T-cell (primary cell): ENCODE measurements at regions of chr9 and their contacts with region 1.

Region 1: GRCh38 chr9:33159760-33160127 is 7.4 kb downstream of the B4GALT1 start:
- DNase-seq: peak in 34 of 35 experiments; percentile 27 to 83 (median 68)
- ATAC-seq: peak; percentile 44 to 77 (median 49)
- H3K4me3 ChIP-seq: peak overlapping the region; percentile 28 to 42
- H3K4me3 Mint-ChIP-seq: peak overlapping the region; percentile 63 to 96 (median 76)
- H3K27ac ChIP-seq: peak overlapping the region; percentile 97
- H3K27ac Mint-ChIP-seq: peak overlapping the region; percentile 94 to 96
- H3K4me1 ChIP-seq: peaks cover 61 to 88% of the 10 kb centered on the region in 2 experiments
- H3K4me1 Mint-ChIP-seq: peaks cover 92 to 97% (median 93%) of the 10 kb centered on the region in 3 donors
- H3K27me3 ChIP-seq: no peaks in the 10 kb centered on the region
- H3K27me3 Mint-ChIP-seq: no peaks in the 10 kb centered on the region

Region 2: GRCh38 chr9:33092634-33093033 is 67.1 kb before region 1 on chr9:
- CTCF ChIA-PET with region 1: no interaction called
- POLR2A ChIA-PET with region 1: no interaction called
- DNase-seq: no peak
- ATAC-seq: no peak
- H3K4me3 ChIP-seq: no peak overlapping the region
- H3K4me3 Mint-ChIP-seq: no peak overlapping the region
- H3K27ac ChIP-seq: no peak overlapping the region
- H3K27ac Mint-ChIP-seq: no peak overlapping the region
- H3K4me1 ChIP-seq: no peaks in the 10 kb centered on the region
- H3K4me1 Mint-ChIP-seq: peaks cover 0 to 6% (median 6%) of the 10 kb centered on the region in 3 donors
- H3K27me3 ChIP-seq: no peaks in the 10 kb centered on the region
- H3K27me3 Mint-ChIP-seq: no peaks in the 10 kb centered on the region

Region 3: GRCh38 chr9:33140401-33141360 is 19.1 kb before region 1 on chr9:
- CTCF ChIA-PET with region 1: interaction called in 1 of 2 experiments, 4 read pairs
- POLR2A ChIA-PET with region 1: interaction called, 8 to 11 read pairs
- DNase-seq: no peak
- ATAC-seq: peak in 1 of 4 experiments; percentile 18
- H3K4me3 ChIP-seq: no peak overlapping the region
- H3K4me3 Mint-ChIP-seq: peak overlapping the region; percentile 0 to 79 (median 50)
- H3K27ac ChIP-seq: peak overlapping the region; percentile 73
- H3K27ac Mint-ChIP-seq: peak overlapping the region; percentile 94 to 98
- H3K4me1 ChIP-seq: peaks cover 61 to 99% of the 10 kb centered on the region in 2 experiments
- H3K4me1 Mint-ChIP-seq: peaks cover 96 to 98% (median 96%) of the 10 kb centered on the region in 3 donors
- H3K27me3 ChIP-seq: no peaks in the 10 kb centered on the region
- H3K27me3 Mint-ChIP-seq: no peaks in the 10 kb centered on the region